ENCODE measurements at regions of chr3 and their contacts with region 1.

Region 1: DNA sequence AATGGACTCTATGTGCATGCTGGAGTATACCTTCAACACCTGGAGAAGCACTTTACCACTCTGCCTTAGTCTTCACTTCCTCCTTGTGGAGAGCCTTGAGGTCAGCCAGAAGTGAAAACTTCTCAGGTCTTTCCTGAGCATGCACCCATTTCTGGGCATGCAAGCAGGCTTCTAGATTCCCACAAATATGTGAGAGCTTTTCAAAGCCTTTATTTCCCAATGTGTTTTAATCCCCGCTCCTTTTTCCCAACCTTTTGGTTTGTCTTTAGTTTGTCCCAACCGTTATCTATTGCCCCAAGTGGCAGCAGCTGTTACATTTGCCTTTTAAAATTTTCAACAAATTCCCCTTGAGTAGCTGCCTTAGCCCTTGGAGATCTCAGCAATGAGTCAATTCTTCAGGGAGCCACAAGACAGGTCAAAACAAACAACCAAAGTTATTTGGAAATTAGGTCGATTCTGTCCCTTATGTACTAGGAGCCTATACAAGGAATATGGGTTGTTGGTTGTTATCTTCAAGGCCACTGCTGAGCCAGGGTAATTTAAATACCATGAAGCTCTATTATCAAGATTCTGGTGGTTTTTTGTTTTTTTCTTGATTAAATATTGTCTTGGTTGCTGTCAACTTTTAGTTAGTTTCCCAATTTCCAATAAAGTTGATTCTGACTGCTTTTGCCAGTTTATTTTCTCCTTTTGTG is 44.4 kb downstream of the LSM3 start:
- DNase-seq: no peak
- H3K4me3 ChIP-seq: no peak overlapping the region
- CTCF ChIP-seq: no peak

Region 2: GRCh38 chr3:14137004-14137403 is 86.0 kb before region 1 on chr3:
- CTCF ChIA-PET with region 1: no interaction called
- POLR2A ChIA-PET with region 1: no interaction called
- DNase-seq: no peak
- H3K4me3 ChIP-seq: no peak overlapping the region
- CTCF ChIP-seq: no peak

Region 3: GRCh38 chr3:14194865-14195264 is 28.2 kb before region 1 on chr3:
- CTCF ChIA-PET with region 1: no interaction called
- POLR2A ChIA-PET with region 1: no interaction called
- DNase-seq: no peak
- H3K4me3 ChIP-seq: no peak overlapping the region
- CTCF ChIP-seq: no peak

Region 4: DNA sequence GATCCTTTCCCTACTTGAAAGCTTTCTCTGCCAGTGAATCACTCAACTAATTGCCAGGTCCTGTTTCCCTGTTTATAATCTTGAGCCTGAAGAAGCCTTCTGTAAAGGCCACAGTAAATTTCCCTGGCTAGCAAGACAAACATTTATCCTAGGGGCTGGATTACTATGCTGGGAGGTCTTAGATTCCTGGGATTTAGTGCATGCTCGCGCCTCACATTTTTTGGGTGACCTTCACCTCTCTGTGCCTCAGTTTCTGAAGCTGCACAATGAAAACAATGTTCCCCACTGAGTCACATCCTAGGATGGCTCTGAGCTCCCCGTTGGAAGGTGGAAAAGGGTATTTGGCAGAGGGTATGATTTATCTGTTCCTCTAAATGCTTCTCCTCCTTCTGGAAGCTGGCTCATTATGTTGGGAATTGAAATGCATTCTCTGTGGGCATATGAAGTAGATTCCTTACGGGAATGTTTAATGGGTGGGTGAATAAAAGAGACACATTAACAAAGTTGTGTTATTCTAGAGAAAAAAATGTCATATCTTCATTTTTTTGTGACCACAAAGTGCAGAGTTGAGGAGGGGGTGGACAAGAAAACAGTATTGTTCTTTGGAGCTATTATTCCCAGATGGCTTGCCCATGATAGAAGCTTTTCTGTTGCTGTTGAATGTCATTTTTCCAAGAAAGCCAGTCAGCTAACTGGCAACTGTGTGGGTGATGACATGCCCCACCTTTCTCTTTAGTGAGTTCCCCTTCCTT is 12.0 kb before region 1 on chr3:
- CTCF ChIA-PET with region 1: interaction called, 75 read pairs
- POLR2A ChIA-PET with region 1: interaction called, 7 read pairs
- DNase-seq: peak; percentile 97
- H3K4me3 ChIP-seq: no peak overlapping the region
- CTCF ChIP-seq: no peak

Region 5: DNA sequence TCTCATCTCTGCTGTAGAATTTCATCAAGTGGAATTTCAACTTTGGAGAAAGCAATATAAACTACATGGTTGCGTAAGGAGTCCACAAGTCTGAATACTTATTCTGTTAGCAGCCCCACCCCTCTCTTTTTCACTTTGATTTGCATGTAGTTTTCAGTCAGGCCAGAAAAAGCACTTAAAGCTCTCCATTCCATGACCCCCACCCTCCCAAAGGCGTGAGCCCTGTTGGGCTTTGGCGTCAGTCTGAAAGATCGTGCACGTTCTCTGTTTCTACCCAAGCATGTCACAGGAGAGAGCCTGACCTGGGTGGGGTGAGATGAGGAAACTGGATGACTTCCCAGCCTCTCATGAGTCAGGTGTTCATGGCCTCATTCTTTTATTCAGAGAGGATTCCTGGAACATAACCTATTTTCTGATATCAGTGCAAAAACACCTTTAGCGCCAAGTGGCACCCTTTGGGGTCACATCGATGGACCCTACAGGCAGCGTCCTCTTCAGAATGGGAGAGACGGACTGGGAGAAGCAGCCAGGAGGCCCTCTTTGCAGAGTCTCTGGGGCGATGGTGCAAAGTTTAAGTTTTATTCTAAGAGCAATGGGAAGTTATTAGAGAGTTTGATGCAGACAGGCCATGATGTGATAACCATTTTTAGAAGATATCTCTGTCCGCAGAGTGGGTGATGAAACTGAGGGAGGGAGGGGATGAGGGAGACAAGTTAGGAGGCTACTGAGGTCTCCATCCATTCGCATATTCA is 11.4 kb after region 1 on chr3:
- CTCF ChIA-PET with region 1: interaction called, 13 read pairs
- POLR2A ChIA-PET with region 1: no interaction called
- DNase-seq: no peak
- H3K4me3 ChIP-seq: no peak overlapping the region
- CTCF ChIP-seq: no peak

Measured in AG04449 (cell line).